WTC11 (cell line): ENCODE measurements at regions of chr7 and their contacts with region 1.

Region 1: DNA sequence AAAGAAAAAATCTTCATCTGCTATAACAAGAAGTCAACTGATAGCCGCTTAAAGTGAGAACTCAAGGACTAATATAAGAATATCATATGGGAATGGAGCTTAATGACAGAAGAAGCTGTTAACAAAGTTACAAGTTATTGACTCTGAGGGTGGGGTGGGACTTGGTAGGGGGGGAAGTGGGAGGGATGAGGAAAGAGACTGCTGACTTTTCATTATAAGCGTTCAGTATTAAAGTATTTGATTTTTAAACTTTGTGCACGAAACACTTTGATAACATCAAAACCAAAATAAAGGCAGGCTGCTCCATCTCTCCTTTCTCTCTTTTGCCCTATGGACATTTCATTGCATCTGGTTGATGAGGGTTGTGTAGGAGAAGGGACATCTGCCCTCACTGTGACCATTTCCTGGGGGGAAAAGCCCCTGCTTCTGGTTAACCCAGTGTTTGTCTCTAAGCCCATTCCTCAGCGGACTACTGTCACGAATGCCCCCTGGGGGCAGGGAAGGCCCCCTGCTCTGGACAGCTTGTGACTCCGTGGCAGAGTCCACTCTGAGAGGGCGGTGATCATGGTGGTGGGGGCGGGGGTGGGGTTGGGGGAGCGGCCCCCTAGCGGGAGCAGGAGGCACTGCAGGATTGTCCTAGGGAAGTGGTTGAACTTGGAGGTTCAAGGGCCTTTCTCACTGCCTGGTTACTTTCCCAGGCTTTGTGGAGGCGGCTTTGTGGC is 17.4 kb downstream of the SLC13A4 start:
- DNase-seq: peak; percentile 31
- ATAC-seq: peak; percentile 40
- H3K4me3 Mint-ChIP-seq: no peak overlapping the region; the same call in 1 of the 2 replicates
- H3K27ac Mint-ChIP-seq: no peak overlapping the region
- H3K4me1 Mint-ChIP-seq: peaks cover 22% of the 10 kb centered on the region
- H3K27me3 Mint-ChIP-seq: no peaks in the 10 kb centered on the region
- CTCF ChIP-seq: peak; percentile 92

Region 2: GRCh38 chr7:135397689-135398088 is 312.9 kb before region 1 on chr7:
- CTCF ChIA-PET with region 1: no interaction called
- POLR2A ChIA-PET with region 1: no interaction called
- DNase-seq: no peak
- ATAC-seq: no peak
- H3K4me3 Mint-ChIP-seq: no peak overlapping the region
- H3K27ac Mint-ChIP-seq: no peak overlapping the region
- H3K4me1 Mint-ChIP-seq: no peaks in the 10 kb centered on the region
- H3K27me3 Mint-ChIP-seq: no peaks in the 10 kb centered on the region
- CTCF ChIP-seq: no peak

Region 3: DNA sequence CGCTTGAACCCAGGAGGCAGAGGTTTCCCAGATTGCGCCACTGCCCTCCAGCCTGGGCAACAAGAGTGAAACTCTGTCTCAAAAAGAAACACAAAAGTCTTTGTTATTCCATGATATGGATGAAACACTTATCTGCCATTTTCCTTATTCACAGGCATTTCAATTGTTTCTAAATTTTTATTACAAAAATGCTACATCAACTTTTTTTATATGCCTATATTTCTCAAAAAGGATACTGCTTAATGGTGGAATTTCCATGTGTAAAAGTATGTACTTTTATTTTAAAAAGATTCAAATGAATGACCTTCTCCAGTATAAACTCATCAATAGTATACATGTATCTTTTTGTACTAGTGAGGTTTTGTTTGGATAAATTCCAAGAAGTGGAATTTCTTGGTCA is 90.1 kb before region 1 on chr7:
- CTCF ChIA-PET with region 1: no interaction called
- POLR2A ChIA-PET with region 1: no interaction called
- DNase-seq: no peak
- ATAC-seq: no peak
- H3K4me3 Mint-ChIP-seq: no peak overlapping the region
- H3K27ac Mint-ChIP-seq: no peak overlapping the region
- H3K4me1 Mint-ChIP-seq: no peaks in the 10 kb centered on the region
- H3K27me3 Mint-ChIP-seq: no peaks in the 10 kb centered on the region
- CTCF ChIP-seq: no peak

Region 4: DNA sequence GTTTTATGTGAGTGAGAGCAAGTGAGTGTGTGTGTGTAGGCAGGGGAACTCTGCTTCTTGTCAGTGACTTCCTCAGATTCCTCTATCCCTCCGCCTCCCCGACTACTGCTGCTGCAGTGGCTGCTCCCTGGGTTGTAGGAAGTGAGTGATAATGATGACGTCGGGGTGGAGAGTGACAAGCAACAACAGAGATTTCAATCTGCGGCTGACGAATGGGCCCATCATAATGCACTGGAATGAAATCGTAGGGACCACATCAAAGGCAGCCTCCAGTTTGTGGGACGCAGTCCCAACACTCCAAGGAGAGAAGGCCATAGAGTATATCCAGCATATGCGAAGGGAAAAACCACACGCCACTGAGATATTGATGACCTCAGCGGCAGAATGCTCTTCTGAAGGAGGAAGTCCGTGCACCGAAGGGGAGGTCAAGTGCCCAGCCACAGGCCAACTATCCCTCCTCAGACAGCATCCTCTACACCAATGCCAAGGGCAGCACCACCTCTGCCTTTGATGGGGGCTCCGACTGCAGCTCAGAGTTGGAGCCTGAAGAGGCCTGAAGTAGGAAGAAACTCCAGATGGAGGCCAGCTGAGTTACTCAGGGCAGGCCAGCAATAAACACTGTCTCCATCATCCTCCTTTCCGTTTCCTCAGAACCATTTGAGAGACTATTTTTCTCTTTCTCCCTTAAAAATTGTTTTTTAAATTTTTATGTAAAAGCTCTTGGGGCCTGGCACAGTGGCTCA is 59.6 kb before region 1 on chr7:
- CTCF ChIA-PET with region 1: no interaction called
- POLR2A ChIA-PET with region 1: no interaction called
- DNase-seq: no peak
- ATAC-seq: no peak
- H3K4me3 Mint-ChIP-seq: no peak overlapping the region
- H3K27ac Mint-ChIP-seq: peak overlapping the region; percentile 71
- H3K4me1 Mint-ChIP-seq: peaks cover 8% of the 10 kb centered on the region
- H3K27me3 Mint-ChIP-seq: no peaks in the 10 kb centered on the region
- CTCF ChIP-seq: no peak

Region 5: GRCh38 chr7:135672560-135673359 is 37.8 kb before region 1 on chr7:
- CTCF ChIA-PET with region 1: interaction called, 10 read pairs
- POLR2A ChIA-PET with region 1: no interaction called
- DNase-seq: no peak
- ATAC-seq: peak; percentile 81
- H3K4me3 Mint-ChIP-seq: no peak overlapping the region
- H3K27ac Mint-ChIP-seq: peak overlapping the region; percentile 49; the same call in 1 of the 2 replicates
- H3K4me1 Mint-ChIP-seq: peaks cover 7% of the 10 kb centered on the region
- H3K27me3 Mint-ChIP-seq: no peaks in the 10 kb centered on the region
- CTCF ChIP-seq: peak; percentile 56

Region 6: GRCh38 chr7:135697276-135698049 is 13.1 kb before region 1 on chr7:
- CTCF ChIA-PET with region 1: interaction called, 28 read pairs
- POLR2A ChIA-PET with region 1: no interaction called
- DNase-seq: no peak
- ATAC-seq: peak; percentile 79
- H3K4me3 Mint-ChIP-seq: no peak overlapping the region
- H3K27ac Mint-ChIP-seq: peak overlapping the region; percentile 10
- H3K4me1 Mint-ChIP-seq: peaks cover 8% of the 10 kb centered on the region
- H3K27me3 Mint-ChIP-seq: no peaks in the 10 kb centered on the region
- CTCF ChIP-seq: no peak

Region 7: GRCh38 chr7:135728136-135728669 is 17.6 kb after region 1 on chr7 and contains the start of gene SLC13A4:
- CTCF ChIA-PET with region 1: interaction called, 49 read pairs
- POLR2A ChIA-PET with region 1: no interaction called
- DNase-seq: peak; percentile 72
- ATAC-seq: peak; percentile 92
- H3K4me3 Mint-ChIP-seq: peak within 1 kb of the TSS; percentile 56
- H3K27ac Mint-ChIP-seq: no peak within 1 kb of the TSS
- H3K4me1 Mint-ChIP-seq: peaks cover 19% of the 10 kb centered on the region
- H3K27me3 Mint-ChIP-seq: no peaks in the 10 kb centered on the region; the same call in 1 of the 2 replicates
- CTCF ChIP-seq: no peak
- total RNA-seq, gene SLC13A4: 1.6 to 2.1 TPM (median 1.7 TPM) in 3 replicates

Region 8: GRCh38 chr7:135771961-135772638 is 61.5 kb after region 1 on chr7:
- CTCF ChIA-PET with region 1: interaction called, 15 read pairs
- POLR2A ChIA-PET with region 1: no interaction called
- DNase-seq: no peak
- ATAC-seq: no peak
- H3K4me3 Mint-ChIP-seq: no peak overlapping the region
- H3K27ac Mint-ChIP-seq: no peak overlapping the region
- H3K4me1 Mint-ChIP-seq: peaks cover 22% of the 10 kb centered on the region
- H3K27me3 Mint-ChIP-seq: peaks cover 2% of the 10 kb centered on the region; the same call in 1 of the 2 replicates
- CTCF ChIP-seq: no peak